Heart right ventricle (tissue), 16 donors: ENCODE measurements at regions of chr12 and their contacts with region 1.

Region 1: GRCh38 chr12:12562585-12563261 is at the start of gene DUSP16:
- DNase-seq: peak; percentile 92 to 93
- ATAC-seq: peak; percentile 94 to 98 (median 96)
- H3K4me3 ChIP-seq: peak within 1 kb of the TSS; percentile 59 to 89 (median 75)
- H3K27ac ChIP-seq: peak within 1 kb of the TSS; percentile 98 to 100 (median 100)
- H3K4me1 ChIP-seq: peaks cover 0 to 45% (median 32%) of the 10 kb centered on the region in 9 donors
- H3K27me3 ChIP-seq: no peaks in the 10 kb centered on the region
- CTCF ChIP-seq: peak in 6 of 9 donors; percentile 8 to 51 (median 34)
- total RNA-seq, gene DUSP16: 10.9 to 21.7 (median 17.6) TPM

Region 2: DNA sequence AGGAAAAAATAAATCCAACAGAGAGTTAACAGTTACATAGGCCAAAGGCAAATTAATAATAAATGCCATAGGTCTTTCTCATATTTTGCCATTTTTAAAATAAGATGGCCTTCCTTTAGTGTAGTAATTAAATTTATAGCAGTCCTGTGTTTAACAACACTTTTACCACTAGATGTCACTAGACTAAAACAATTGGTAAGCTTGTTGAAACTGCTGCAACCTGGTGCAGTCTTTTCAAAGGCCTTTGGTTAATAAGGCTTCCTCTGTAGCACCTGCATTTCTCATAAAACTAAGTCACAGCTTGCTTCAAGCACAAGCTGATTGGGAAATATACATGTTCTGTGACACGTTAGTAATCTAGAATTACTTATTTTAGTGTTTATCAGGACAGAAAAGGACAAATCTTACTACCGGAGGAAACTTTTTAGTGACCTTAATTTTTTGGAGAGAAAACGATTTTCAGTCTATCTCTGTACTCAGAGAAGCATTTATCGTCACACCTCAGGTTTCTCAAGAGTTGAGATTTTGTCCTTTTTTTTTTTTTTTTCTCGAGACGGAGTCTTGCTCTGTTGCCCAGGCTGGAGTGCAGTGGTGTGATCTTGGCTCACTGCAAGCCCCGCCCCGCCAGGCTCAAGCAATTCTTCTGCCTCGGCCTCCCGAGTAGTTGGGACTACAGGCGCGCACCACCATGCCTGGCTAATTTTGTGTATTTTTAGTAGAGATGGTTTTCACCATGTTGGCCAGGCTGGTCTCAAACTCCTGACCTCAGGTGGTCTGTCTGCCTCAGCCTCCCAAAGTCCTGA is 185.9 kb before region 1 on chr12:
- intact Hi-C with region 1: loop called (anchors 1 to 5 kb)
- DNase-seq: no peak
- ATAC-seq: peak in 7 of 8 donors; percentile 65 to 89 (median 80)
- H3K4me3 ChIP-seq: no peak overlapping the region
- H3K27ac ChIP-seq: peak overlapping the region in 1 of 10 donors; percentile 10
- H3K4me1 ChIP-seq: peaks cover 0 to 35% (median 9%) of the 10 kb centered on the region in 9 donors
- H3K27me3 ChIP-seq: no peaks in the 10 kb centered on the region
- CTCF ChIP-seq: peak; percentile 51 to 86 (median 75)

Region 3: GRCh38 chr12:12442548-12443071 is 120.1 kb before region 1 on chr12:
- intact Hi-C with region 1: loop called in 2 of 10 experiments (anchors 5 kb)
- DNase-seq: no peak
- ATAC-seq: peak; percentile 46 to 75 (median 68)
- H3K4me3 ChIP-seq: no peak overlapping the region
- H3K27ac ChIP-seq: peak overlapping the region; percentile 5 to 89 (median 72)
- H3K4me1 ChIP-seq: peaks cover 7 to 78% (median 45%) of the 10 kb centered on the region in 9 donors
- H3K27me3 ChIP-seq: no peaks in the 10 kb centered on the region
- CTCF ChIP-seq: no peak

Region 4: DNA sequence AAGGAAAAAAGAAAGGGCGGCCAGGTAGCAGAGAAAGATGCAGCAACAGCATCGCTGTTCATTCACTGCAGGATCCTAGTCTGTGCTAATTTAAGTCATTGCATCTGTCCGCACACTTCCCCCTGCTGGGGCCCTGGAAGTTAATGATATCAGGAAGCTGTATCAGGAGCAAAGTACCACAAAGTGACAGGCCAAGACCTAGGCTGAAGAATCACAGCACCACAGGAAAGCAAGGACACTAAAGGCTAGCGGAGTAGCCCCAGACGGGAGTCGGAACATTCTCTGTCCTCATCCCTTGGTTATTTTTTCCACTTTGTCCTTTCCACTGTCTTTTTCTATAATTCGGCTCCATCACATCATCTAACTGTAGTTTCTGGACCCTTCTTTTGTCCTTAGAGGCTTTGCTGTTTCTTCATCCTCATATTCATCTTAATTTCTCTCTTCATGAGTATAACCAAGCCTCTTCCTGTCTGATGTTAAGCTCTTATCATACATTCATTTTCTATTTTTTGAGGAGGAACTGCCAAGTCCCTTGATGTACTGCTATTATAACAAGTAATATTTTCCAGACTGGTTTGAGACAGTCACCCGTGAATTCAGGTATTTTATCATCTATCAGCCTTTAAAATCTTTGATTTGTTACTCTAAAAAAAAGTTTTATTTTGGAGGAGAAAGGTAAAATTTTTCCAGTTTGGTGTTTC is 28.4 kb before region 1 on chr12:
- intact Hi-C with region 1: loop called in 1 of 10 experiments (anchors 1 kb)
- DNase-seq: peak in 1 of 2 donors; percentile 17
- ATAC-seq: peak in 7 of 8 donors; percentile 47 to 72 (median 62)
- H3K4me3 ChIP-seq: no peak overlapping the region
- H3K27ac ChIP-seq: peak overlapping the region in 9 of 10 donors; percentile 46 to 79 (median 67)
- H3K4me1 ChIP-seq: peaks cover 7 to 59% (median 37%) of the 10 kb centered on the region in 9 donors
- H3K27me3 ChIP-seq: no peaks in the 10 kb centered on the region
- CTCF ChIP-seq: peak in 2 of 9 donors; percentile 4 to 9

Region 5: GRCh38 chr12:12592930-12593329 is 30.2 kb after region 1 on chr12:
- intact Hi-C with region 1: no loop called
- DNase-seq: no peak
- ATAC-seq: no peak
- H3K4me3 ChIP-seq: no peak overlapping the region
- H3K27ac ChIP-seq: no peak overlapping the region
- H3K4me1 ChIP-seq: no peaks in the 10 kb centered on the region
- H3K27me3 ChIP-seq: no peaks in the 10 kb centered on the region
- CTCF ChIP-seq: no peak

Region 6: GRCh38 chr12:12628013-12628412 is 65.3 kb after region 1 on chr12:
- intact Hi-C with region 1: no loop called
- DNase-seq: no peak
- ATAC-seq: no peak
- H3K4me3 ChIP-seq: no peak overlapping the region
- H3K27ac ChIP-seq: no peak overlapping the region
- H3K4me1 ChIP-seq: peaks cover 0 to 18% (median 3%) of the 10 kb centered on the region in 9 donors
- H3K27me3 ChIP-seq: no peaks in the 10 kb centered on the region
- CTCF ChIP-seq: no peak

Region 7: GRCh38 chr12:12654691-12655460 is 92.2 kb after region 1 on chr12:
- intact Hi-C with region 1: loop called in 1 of 10 experiments (anchors 10 kb)
- DNase-seq: no peak
- ATAC-seq: no peak
- H3K4me3 ChIP-seq: no peak overlapping the region
- H3K27ac ChIP-seq: no peak overlapping the region
- H3K4me1 ChIP-seq: peaks cover 0 to 7% (median 0%) of the 10 kb centered on the region in 9 donors
- H3K27me3 ChIP-seq: no peaks in the 10 kb centered on the region
- CTCF ChIP-seq: no peak

Region 8: DNA sequence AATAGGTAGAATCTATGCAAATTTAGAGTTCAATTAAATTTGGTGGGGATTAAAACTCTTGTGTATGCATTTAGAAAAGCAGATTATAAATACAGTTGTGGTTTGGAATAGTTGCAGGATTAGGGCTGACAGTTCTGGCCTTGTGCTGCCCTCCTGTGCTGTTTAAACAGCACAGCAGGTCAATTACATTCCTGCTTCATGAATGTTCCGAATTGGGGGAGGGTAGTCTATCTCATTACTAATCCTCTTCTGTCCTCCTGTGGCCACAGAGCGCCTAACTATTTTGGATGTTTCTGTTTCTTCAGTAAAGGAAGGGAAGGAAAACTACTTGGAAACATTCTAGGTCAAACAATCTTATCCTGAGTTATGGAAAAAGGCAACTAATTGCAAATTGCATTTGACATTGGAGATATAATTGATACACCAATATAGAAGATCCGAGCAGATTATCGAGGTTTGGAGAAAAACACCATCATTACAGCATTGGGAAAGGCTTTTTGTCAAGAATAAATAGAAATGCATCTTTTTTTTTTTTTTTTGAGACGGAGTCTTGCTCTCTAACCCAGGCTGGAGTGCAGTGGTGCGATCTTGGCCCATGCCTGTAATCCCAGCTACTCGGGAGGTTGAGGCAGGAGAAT is 142.0 kb after region 1 on chr12:
- intact Hi-C with region 1: loop called in 3 of 10 experiments (anchors 5 to 10 kb)
- DNase-seq: peak in 1 of 2 donors; percentile 63
- ATAC-seq: peak; percentile 94 to 99 (median 98)
- H3K4me3 ChIP-seq: no peak overlapping the region
- H3K27ac ChIP-seq: peak overlapping the region in 1 of 10 donors; percentile 15
- H3K4me1 ChIP-seq: peaks cover 0 to 11% (median 3%) of the 10 kb centered on the region in 9 donors
- H3K27me3 ChIP-seq: no peaks in the 10 kb centered on the region
- CTCF ChIP-seq: peak; percentile 58 to 95 (median 82)

Region 9: DNA sequence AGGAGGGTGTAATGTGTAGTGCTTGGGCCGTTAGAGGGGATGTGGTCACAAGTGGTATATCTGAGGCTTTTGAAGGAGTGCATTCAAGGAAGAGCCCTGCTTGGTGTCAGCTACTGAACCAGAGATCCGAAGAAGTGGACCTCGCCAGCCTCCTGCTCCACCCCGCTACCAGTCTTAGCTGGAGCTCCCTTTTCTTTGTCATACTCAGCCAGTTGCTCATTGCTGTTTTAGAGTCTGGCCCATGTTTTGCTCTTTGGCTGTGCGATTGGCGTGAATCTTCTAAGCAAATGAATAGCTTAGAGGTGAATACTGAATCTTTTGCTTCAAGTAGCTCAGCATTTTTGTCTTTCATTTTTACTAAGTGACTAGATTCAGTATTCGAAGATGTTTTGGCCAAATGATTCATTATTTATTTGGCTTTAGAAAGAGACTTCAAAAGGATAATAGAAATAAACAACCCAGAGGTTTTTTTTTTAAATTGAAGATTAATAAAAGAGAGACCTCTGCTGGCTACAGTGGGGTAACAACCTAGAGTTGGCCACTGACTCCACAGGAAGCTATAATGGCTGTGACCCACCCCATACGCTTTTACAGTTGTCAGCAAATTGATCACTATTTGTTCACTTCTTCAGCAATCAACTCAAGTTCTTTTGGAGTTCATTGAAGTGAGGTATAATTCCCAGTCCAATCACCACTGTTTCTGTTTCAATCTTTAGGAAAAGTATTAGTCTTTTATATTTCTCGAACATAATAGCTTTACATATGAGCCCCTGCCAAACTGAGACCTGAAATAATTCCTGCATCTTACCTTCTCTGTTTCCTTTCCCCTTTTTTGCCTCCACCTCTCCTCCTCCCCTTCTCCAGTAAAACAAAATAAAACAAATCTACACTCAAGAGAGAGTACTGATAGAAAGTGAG is 174.3 kb after region 1 on chr12:
- intact Hi-C with region 1: loop called in 1 of 10 experiments (anchors 10 kb)
- DNase-seq: peak in 1 of 2 donors; percentile 29
- ATAC-seq: peak; percentile 67 to 83 (median 79)
- H3K4me3 ChIP-seq: peak overlapping the region in 3 of 10 donors; percentile 2 to 24 (median 15)
- H3K27ac ChIP-seq: peak overlapping the region in 4 of 10 donors; percentile 24 to 80 (median 60)
- H3K4me1 ChIP-seq: peaks cover 0 to 36% (median 24%) of the 10 kb centered on the region in 9 donors
- H3K27me3 ChIP-seq: no peaks in the 10 kb centered on the region
- CTCF ChIP-seq: peak; percentile 38 to 81 (median 67)